ENCODE measurements at regions of chr4 and their contacts with region 1.

Region 1: DNA sequence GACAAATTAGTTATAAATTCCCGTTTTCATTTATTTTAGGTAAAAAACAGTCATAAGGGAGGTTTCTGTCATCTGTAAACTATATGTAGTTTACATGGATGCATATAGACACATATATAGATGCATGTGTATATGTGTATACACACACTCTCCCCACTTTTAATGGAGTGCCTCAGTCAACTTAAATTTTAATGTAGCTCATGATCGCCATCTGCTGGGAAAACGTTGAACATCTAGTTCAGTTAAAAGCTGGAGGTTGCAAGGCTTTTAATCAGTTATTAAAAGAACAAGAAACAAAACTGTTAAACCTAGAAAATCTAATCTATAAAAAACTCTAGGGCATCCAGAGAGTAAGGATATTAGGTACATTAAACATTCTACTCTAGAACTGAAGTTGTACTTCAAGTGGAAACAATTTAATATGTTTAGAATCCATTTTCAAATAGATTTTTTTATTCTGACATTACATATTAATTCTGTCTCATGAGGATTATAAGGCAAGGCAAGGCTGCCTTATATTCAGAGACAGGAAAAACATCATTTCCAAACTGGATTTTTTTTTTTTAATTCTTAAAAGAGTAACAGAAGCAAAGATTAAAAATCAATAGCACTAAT is 122.6 kb downstream of the SHISA3 start:
- DNase-seq: peak; percentile 59
- H3K4me3 Mint-ChIP-seq: no peak overlapping the region
- H3K27ac Mint-ChIP-seq: no peak overlapping the region
- H3K4me1 Mint-ChIP-seq: peaks cover 4% of the 10 kb centered on the region
- H3K27me3 Mint-ChIP-seq: no peaks in the 10 kb centered on the region
- CTCF ChIP-seq: peak; percentile 40

Region 2: DNA sequence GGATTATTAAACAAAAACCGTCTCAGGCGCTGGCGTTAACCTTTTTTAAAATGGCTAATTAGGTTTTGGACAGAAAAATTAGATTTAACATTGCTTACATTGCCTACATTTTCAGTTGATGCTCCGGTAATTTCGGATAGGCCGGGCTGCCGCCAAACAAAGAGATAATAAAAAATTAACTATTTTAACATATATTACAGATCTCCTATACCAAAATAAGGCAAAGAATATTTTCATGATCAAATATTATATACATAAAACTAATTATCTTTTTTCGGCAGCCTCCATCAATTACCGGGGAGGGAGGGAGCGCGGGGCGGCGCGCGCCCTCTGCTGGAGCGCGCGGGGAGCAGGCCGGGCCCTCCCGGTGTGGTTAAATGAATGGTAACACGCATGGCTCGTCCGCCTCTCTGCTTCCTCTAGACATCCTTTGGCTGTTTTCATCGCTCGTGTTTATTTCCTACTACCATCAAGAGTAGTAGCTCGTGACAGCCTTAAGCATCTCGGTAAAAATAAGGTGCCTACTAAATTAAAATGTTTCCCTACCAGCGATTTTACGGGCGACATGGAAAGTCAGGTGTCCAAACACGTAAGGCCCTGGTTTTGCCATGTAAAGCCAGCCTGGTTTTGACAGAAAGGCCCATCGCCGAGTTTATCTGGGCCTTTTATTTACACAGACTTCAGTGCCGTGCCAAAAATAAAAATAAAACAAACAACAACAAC is 637.1 kb before region 1 on chr4:
- CTCF ChIA-PET with region 1: interaction called, 6 read pairs
- POLR2A ChIA-PET with region 1: no interaction called
- intact Hi-C with region 1: loop called (anchors 10 kb)
- DNase-seq: peak; percentile 57
- H3K4me3 Mint-ChIP-seq: peak overlapping the region; percentile 65
- H3K27ac Mint-ChIP-seq: peak overlapping the region; percentile 65
- H3K4me1 Mint-ChIP-seq: peaks cover 15% of the 10 kb centered on the region
- H3K27me3 Mint-ChIP-seq: no peaks in the 10 kb centered on the region
- CTCF ChIP-seq: peak; percentile 88

Region 3: GRCh38 chr4:42339935-42340406 is 179.9 kb before region 1 on chr4:
- CTCF ChIA-PET with region 1: no interaction called
- POLR2A ChIA-PET with region 1: no interaction called
- intact Hi-C with region 1: no loop called
- DNase-seq: no peak
- H3K4me3 Mint-ChIP-seq: no peak overlapping the region
- H3K27ac Mint-ChIP-seq: no peak overlapping the region
- H3K4me1 Mint-ChIP-seq: no peaks in the 10 kb centered on the region
- H3K27me3 Mint-ChIP-seq: no peaks in the 10 kb centered on the region
- CTCF ChIP-seq: no peak

Region 4: DNA sequence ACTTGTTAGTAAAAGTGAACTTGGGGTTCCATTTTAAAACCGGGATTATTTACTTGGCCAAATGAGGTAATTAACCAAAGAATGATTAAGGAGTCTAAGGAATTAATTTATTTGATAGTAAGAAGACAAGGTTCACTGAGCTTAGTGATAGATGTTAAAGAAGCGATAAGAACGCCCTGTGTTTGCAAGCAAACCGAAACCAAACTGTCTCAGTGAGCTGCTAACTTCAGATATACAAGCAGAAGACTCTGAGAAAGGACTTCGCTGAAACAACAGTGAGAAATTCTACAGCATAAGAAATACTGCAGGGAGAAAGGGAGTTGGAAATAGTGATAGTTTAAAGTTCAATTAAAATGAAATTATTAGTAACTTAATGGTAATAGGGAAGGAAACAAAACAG is 160.2 kb before region 1 on chr4:
- CTCF ChIA-PET with region 1: interaction called, 11 read pairs
- POLR2A ChIA-PET with region 1: no interaction called
- intact Hi-C with region 1: no loop called
- DNase-seq: no peak
- H3K4me3 Mint-ChIP-seq: peak overlapping the region; percentile 30
- H3K27ac Mint-ChIP-seq: no peak overlapping the region
- H3K4me1 Mint-ChIP-seq: peaks cover 6% of the 10 kb centered on the region
- H3K27me3 Mint-ChIP-seq: no peaks in the 10 kb centered on the region
- CTCF ChIP-seq: no peak

Region 5: DNA sequence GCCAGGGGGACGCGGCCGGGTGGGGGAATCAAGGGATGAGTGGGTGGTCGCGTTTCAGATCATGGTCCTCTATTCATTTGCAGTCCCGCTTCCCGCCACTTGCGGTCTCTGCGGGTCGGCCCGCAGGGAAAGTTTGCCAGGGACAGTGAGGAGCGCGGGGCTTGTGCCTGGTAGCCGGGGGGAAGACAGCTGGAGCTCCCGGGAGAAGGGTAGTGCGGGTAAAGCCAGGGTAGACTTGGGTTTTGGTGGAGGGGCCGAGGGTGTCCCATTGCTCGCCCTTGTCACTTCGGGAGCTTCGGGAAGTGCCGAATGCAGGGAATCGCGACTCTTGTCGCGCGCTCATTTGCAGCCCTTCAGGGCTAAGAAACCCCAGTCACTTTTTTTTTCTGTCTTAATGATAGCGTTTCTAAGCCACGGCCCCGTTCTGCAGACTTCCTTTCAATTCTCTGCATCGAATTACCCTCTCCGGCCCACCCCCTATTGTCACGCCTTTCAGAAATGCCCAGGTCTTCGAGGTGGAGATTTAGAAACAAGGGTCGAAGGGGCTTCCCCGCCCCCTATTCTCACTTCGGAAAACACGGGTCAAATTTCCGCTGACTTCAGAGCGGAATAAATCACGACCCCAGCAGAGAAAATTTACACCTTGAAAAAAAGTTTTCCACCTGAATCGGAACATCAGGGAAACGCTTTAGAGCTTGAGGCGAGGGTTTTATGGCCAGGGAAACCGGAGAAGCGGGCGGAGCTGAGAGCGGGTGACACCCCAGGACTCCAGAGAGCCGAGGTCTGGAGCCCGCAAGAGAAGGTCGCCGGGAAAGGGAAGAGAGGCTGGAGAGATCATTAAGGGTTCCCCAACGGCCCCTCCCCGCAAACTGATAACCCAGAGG is 121.2 kb before region 1 on chr4:
- CTCF ChIA-PET with region 1: interaction called, 27 read pairs
- POLR2A ChIA-PET with region 1: no interaction called
- intact Hi-C with region 1: loop called (anchors 1 kb)
- DNase-seq: no peak
- H3K4me3 Mint-ChIP-seq: peak overlapping the region; percentile 53
- H3K27ac Mint-ChIP-seq: no peak overlapping the region
- H3K4me1 Mint-ChIP-seq: no peaks in the 10 kb centered on the region
- H3K27me3 Mint-ChIP-seq: peaks cover 15% of the 10 kb centered on the region
- CTCF ChIP-seq: no peak

Region 6: GRCh38 chr4:42498040-42498439 is 21.9 kb before region 1 on chr4:
- CTCF ChIA-PET with region 1: interaction called, 10 read pairs
- POLR2A ChIA-PET with region 1: no interaction called
- intact Hi-C with region 1: no loop called
- DNase-seq: no peak
- H3K4me3 Mint-ChIP-seq: no peak overlapping the region
- H3K27ac Mint-ChIP-seq: no peak overlapping the region
- H3K4me1 Mint-ChIP-seq: no peaks in the 10 kb centered on the region
- H3K27me3 Mint-ChIP-seq: no peaks in the 10 kb centered on the region
- CTCF ChIP-seq: no peak

Region 7: GRCh38 chr4:42729505-42730237 is 209.8 kb after region 1 on chr4:
- CTCF ChIA-PET with region 1: no interaction called
- POLR2A ChIA-PET with region 1: no interaction called
- intact Hi-C with region 1: no loop called
- DNase-seq: no peak
- H3K4me3 Mint-ChIP-seq: no peak overlapping the region
- H3K27ac Mint-ChIP-seq: no peak overlapping the region
- H3K4me1 Mint-ChIP-seq: no peaks in the 10 kb centered on the region
- H3K27me3 Mint-ChIP-seq: no peaks in the 10 kb centered on the region
- CTCF ChIP-seq: no peak

Region 8: DNA sequence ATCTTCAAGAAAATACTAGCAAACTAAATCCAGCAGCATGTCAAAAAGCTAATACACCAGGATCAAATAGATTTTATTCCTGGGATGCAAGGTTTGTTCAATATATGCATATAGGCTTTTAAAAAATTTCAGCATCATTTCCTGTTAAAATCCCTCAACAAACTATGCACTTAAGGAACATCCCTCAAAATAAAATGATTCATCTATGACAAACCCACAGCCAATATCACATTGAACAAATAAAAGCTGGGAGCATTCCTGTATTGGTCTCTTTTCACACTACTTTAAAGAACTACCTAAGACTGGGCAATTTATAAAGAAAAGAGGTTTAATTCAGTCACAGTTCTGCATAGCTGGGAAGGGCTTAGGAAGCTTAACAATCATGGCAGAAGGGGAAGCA is 1099.3 kb after region 1 on chr4:
- CTCF ChIA-PET with region 1: no interaction called
- POLR2A ChIA-PET with region 1: no interaction called
- intact Hi-C with region 1: no loop called
- DNase-seq: no peak
- H3K4me3 Mint-ChIP-seq: no peak overlapping the region
- H3K27ac Mint-ChIP-seq: no peak overlapping the region
- H3K4me1 Mint-ChIP-seq: no peaks in the 10 kb centered on the region
- H3K27me3 Mint-ChIP-seq: no peaks in the 10 kb centered on the region
- CTCF ChIP-seq: no peak

Measured in MCF 10A (cell line).